Activated T-helper 2 cell treated with anti-CD3 and anti-CD28 coated beads, Interferon-gamma antibody, Interleukin-2, Interleukin-4, amounts not matched to agents 10 μg/mL and 5 μg/mL and 100 μg/mL, durations not matched to agents 14 hours and 24 hours and 36 hours (primary cell): ENCODE measurements at regions of chr13 and their contacts with region 1.

Region 1: GRCh38 chr13:23966691-23967615 is 69.7 kb upstream of the C1QTNF9B start:
- DNase-seq: peak; percentile 24
- H3K4me3 Mint-ChIP-seq: peak overlapping the region; percentile 73
- H3K27ac Mint-ChIP-seq: peak overlapping the region; percentile 87
- H3K4me1 Mint-ChIP-seq: peaks cover 31% of the 10 kb centered on the region
- H3K27me3 Mint-ChIP-seq: no peaks in the 10 kb centered on the region

Region 2: DNA sequence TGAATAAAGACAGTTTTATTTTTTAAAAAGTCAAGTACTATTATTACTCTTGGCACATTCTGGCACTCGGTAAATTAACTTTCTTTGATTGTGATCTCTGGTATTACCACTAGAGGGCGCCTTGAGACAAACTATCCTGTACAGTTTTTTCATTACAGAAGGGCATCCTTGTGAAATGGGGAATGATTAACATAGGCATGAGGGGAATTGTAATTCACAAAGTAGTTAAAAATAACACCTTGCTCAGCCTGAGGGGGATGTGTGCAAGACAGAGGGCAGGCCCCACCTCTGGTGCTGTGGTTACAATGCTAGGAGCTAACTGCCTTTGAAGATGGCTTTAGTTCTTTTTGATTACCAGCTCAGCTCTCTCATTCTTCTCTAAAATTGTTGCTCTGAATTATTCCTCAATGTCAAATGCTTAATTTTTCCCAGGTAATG is 45.5 kb before region 1 on chr13:
- intact Hi-C with region 1: loop called (anchors 2 kb)
- DNase-seq: no peak
- H3K4me3 Mint-ChIP-seq: no peak overlapping the region
- H3K27ac Mint-ChIP-seq: no peak overlapping the region
- H3K4me1 Mint-ChIP-seq: no peaks in the 10 kb centered on the region
- H3K27me3 Mint-ChIP-seq: peaks cover 54% of the 10 kb centered on the region

Region 3: DNA sequence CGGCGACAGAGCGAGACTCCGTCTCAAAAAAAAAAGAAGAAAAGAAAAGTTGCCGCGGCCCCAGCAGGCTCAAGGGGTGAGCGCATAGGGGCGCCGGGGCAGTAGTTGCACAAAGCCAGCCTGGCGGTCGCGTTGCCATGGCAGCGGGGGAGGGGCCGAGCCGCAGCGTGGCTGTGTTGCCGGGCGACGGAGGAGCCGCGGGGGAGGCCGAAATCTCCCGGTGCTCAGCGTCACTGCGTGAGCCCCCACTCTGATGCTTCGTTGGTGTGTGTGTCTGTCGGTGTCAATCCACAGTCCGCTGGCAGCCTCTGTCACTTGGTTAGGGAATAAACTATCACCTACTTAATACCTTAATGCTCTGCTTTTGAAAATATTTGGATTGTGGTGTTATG is 13.2 kb after region 1 on chr13:
- intact Hi-C with region 1: loop called (anchors 2 kb)
- DNase-seq: peak; percentile 84
- H3K4me3 Mint-ChIP-seq: peak overlapping the region; percentile 82
- H3K27ac Mint-ChIP-seq: peak overlapping the region; percentile 68
- H3K4me1 Mint-ChIP-seq: peaks cover 11% of the 10 kb centered on the region
- H3K27me3 Mint-ChIP-seq: peaks cover 53% of the 10 kb centered on the region

Region 4: GRCh38 chr13:24005755-24006281 is 38.9 kb after region 1 on chr13:
- intact Hi-C with region 1: no loop called
- DNase-seq: no peak
- H3K4me3 Mint-ChIP-seq: no peak overlapping the region
- H3K27ac Mint-ChIP-seq: no peak overlapping the region
- H3K4me1 Mint-ChIP-seq: no peaks in the 10 kb centered on the region
- H3K27me3 Mint-ChIP-seq: peaks cover 18% of the 10 kb centered on the region